Breast epithelium (tissue), 4 donors: ENCODE measurements at regions of chr3 and their contacts with region 1.

Region 1: GRCh38 chr3:138915503-138916498 is 31.1 kb downstream of the FOXL2 start:
- DNase-seq: peak; percentile 88 to 93
- H3K4me3 ChIP-seq: peak overlapping the region; percentile 56 to 71 (median 68)
- H3K27ac ChIP-seq: peak overlapping the region; percentile 89 to 96
- H3K4me1 ChIP-seq: no peaks in the 10 kb centered on the region
- H3K27me3 ChIP-seq: no peaks in the 10 kb centered on the region
- CTCF ChIP-seq: peak; percentile 78 to 94 (median 91)
- POLR2A ChIP-seq: no peak

Region 2: DNA sequence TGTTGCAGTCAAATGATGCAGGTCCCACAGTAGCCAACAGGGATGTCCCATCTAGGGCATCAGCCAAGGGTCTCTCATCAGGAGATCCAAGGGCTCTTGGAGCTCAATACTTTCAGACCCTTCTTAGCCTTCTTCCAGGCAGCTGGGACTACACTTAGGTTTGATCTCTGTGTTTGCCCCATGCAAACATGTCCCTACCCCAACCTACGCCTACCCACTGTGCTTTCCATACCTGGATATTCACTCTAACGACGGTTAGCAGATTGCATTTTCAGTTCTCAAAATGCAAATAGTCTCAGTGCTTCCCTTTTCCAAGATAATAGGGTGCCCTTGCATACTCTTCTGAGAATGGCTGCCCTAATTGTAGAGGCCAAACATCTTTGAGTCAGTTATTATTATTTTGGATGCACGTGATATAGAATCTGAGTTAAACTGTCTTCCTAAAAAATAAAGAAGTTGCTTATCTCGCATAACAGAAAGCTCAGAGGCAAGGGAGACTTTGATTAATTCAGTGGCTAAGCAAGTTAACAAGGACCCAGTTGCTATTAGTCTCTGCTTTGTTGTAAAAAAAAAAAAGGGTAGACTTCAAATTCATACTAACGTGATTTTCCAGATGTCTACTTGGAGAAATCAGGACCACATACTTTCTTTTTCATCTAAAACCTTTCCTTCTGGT is 320.7 kb before region 1 on chr3:
- intact Hi-C with region 1: loop called (anchors 5 kb)
- DNase-seq: no peak
- H3K4me3 ChIP-seq: peak overlapping the region; percentile 74 to 82 (median 79)
- H3K27ac ChIP-seq: peak overlapping the region; percentile 98 to 100
- H3K4me1 ChIP-seq: peaks cover 0 to 6% of the 10 kb centered on the region in 2 donors
- H3K27me3 ChIP-seq: no peaks in the 10 kb centered on the region
- CTCF ChIP-seq: no peak
- POLR2A ChIP-seq: no peak

Region 3: GRCh38 chr3:138694287-138695007 is 221.4 kb before region 1 on chr3:
- intact Hi-C with region 1: loop called (anchors 10 kb)
- DNase-seq: no peak
- H3K4me3 ChIP-seq: no peak overlapping the region
- H3K27ac ChIP-seq: no peak overlapping the region
- H3K4me1 ChIP-seq: no peaks in the 10 kb centered on the region
- H3K27me3 ChIP-seq: no peaks in the 10 kb centered on the region
- CTCF ChIP-seq: no peak
- POLR2A ChIP-seq: no peak

Region 4: GRCh38 chr3:139173372-139174108 is 257.7 kb after region 1 on chr3:
- intact Hi-C with region 1: no loop called
- DNase-seq: no peak
- H3K4me3 ChIP-seq: peak overlapping the region; percentile 24 to 57 (median 38)
- H3K27ac ChIP-seq: no peak overlapping the region
- H3K4me1 ChIP-seq: no peaks in the 10 kb centered on the region
- H3K27me3 ChIP-seq: no peaks in the 10 kb centered on the region
- CTCF ChIP-seq: no peak
- POLR2A ChIP-seq: no peak